Aorta (tissue), 5 donors: ENCODE measurements at regions of chr1 and their contacts with region 1.

Region 1: GRCh38 chr1:12208764-12209494 is 20.9 kb upstream of the VPS13D start:
- DNase-seq: peak; percentile 85 to 96
- ATAC-seq: peak; percentile 90
- H3K4me3 ChIP-seq: no peak overlapping the region
- H3K27ac ChIP-seq: no peak overlapping the region
- H3K4me1 ChIP-seq: no peaks in the 10 kb centered on the region
- H3K27me3 ChIP-seq: no peaks in the 10 kb centered on the region

Region 2: GRCh38 chr1:12124693-12125421 is 84.1 kb before region 1 on chr1:
- intact Hi-C with region 1: loop called (anchors 1 to 2 kb)
- DNase-seq: peak; percentile 84 to 90
- ATAC-seq: peak; percentile 83
- H3K4me3 ChIP-seq: no peak overlapping the region
- H3K27ac ChIP-seq: no peak overlapping the region
- H3K4me1 ChIP-seq: no peaks in the 10 kb centered on the region
- H3K27me3 ChIP-seq: peaks cover 0 to 3% of the 10 kb centered on the region in 2 donors

Region 3: DNA sequence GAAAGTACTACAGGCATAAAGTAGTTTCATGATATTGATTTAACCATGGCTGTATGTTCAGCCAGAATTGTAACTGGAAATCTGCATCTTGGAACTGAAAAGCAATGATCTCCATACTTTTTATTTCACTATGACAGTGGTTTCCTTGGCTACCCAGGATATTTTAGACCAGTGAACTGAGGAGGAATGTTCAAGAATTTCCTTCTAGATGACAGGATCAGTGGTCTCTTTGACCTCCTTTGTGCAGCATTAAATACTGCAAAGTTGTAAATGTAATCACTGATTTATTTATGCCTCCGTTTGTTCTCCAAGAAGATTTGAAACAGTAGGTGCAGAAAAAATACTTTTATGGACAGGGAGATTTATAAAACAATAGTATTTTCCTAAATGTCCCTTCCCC is 60.4 kb after region 1 on chr1:
- intact Hi-C with region 1: no loop called
- DNase-seq: no peak
- ATAC-seq: no peak
- H3K4me3 ChIP-seq: no peak overlapping the region
- H3K27ac ChIP-seq: no peak overlapping the region
- H3K4me1 ChIP-seq: no peaks in the 10 kb centered on the region
- H3K27me3 ChIP-seq: no peaks in the 10 kb centered on the region

Region 4: GRCh38 chr1:12376106-12377045 is 167.4 kb after region 1 on chr1:
- intact Hi-C with region 1: no loop called
- DNase-seq: no peak
- ATAC-seq: no peak
- H3K4me3 ChIP-seq: no peak overlapping the region
- H3K27ac ChIP-seq: no peak overlapping the region
- H3K4me1 ChIP-seq: peaks cover 0 to 5% of the 10 kb centered on the region in 2 donors
- H3K27me3 ChIP-seq: no peaks in the 10 kb centered on the region